PC-9 (cell line): ENCODE measurements at regions of chr2 and their contacts with region 1.

Region 1: DNA sequence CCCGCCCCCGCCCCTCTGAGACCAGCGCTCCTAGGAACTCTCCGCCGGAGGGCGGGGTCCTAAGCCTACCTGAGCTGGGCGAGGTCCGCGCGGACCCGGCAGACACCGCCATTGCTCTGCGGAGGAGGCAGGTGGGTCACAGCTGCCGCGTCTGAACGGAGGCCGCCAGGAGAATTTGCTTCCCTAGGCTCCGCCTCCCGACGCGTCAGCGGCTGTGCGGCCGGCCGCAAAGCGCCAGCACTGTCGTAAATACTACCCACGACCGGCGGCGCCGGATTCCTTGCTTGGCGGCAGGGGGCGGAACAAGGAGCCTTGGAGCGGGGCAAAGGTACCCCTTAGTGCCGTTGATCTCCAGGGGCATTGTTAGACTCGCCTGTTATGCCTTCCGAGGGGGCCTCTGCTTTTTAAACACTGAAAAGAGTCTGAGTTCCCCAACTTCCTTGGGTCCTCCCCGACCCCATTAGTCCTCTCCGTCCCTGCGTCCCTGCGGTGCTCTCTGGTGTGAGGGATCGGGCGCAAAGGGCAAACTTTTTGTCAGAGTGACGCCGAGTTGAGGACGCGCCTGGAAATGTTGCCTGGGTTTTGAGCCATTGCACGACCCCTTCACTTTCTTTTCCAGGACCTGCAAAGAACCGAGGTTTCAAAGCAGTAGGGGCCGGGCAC is at the start of gene GGCX:
- DNase-seq: peak; percentile 86 to 89
- H3K4me3 ChIP-seq: peak within 1 kb of the TSS; percentile 73
- H3K27ac ChIP-seq: peak within 1 kb of the TSS; percentile 65
- H3K4me1 ChIP-seq: peaks cover 15% of the 10 kb centered on the region
- H3K27me3 ChIP-seq: no peaks in the 10 kb centered on the region
- CTCF ChIP-seq: peak; percentile 49; the same call in 1 of the 2 replicates
- total RNA-seq, gene GGCX: 30.2 and 30.6 TPM in 2 replicates

Region 2: GRCh38 chr2:85584857-85585783 is 23.7 kb after region 1 on chr2:
- CTCF ChIA-PET with region 1: interaction called, 3 read pairs
- POLR2A ChIA-PET with region 1: interaction called, 11 read pairs
- intact Hi-C with region 1: no loop called
- DNase-seq: peak; percentile 67 to 89
- H3K4me3 ChIP-seq: no peak overlapping the region
- H3K27ac ChIP-seq: peak overlapping the region; percentile 60
- H3K4me1 ChIP-seq: peaks cover 20% of the 10 kb centered on the region
- H3K27me3 ChIP-seq: no peaks in the 10 kb centered on the region
- CTCF ChIP-seq: no peak

Region 3: GRCh38 chr2:85595301-85596025 is 34.0 kb after region 1 on chr2 and contains the start of gene RNF181:
- CTCF ChIA-PET with region 1: interaction called, 3 read pairs
- POLR2A ChIA-PET with region 1: interaction called, 20 read pairs
- intact Hi-C with region 1: loop called (anchors 5 kb)
- DNase-seq: peak; percentile 88 to 96
- H3K4me3 ChIP-seq: peak within 1 kb of the TSS; percentile 86
- H3K27ac ChIP-seq: peak within 1 kb of the TSS; percentile 53
- H3K4me1 ChIP-seq: peaks cover 23% of the 10 kb centered on the region
- H3K27me3 ChIP-seq: no peaks in the 10 kb centered on the region
- CTCF ChIP-seq: no peak
- total RNA-seq, gene RNF181: 93.9 and 96.7 TPM in 2 replicates